HepG2 (cell line): ENCODE measurements at regions of chr11 and their contacts with region 1.

Region 1: GRCh38 chr11:1988667-1989317 is 8.8 kb downstream of the H19 start:
- DNase-seq: peak; percentile 78
- ATAC-seq: peak; percentile 71
- H3K4me3 ChIP-seq: peak overlapping the region in 2 of 3 experiments; percentile 49 to 50; a peak in 3 of 6 replicates
- H3K27ac ChIP-seq: peak overlapping the region; percentile 90
- H3K4me1 ChIP-seq: no peaks in the 10 kb centered on the region
- H3K27me3 ChIP-seq: no peaks in the 10 kb centered on the region
- CTCF ChIP-seq: no peak
- EP300 ChIP-seq: no peak
- POLR2A ChIP-seq: peak; percentile 54 to 60; a peak in 3 of 4 replicates
- RAD21 ChIP-seq: no peak

Region 2: GRCh38 chr11:1694064-1694845 is 294.5 kb before region 1 on chr11:
- CTCF ChIA-PET with region 1: no interaction called
- POLR2A ChIA-PET with region 1: interaction called, 54 read pairs
- in situ Hi-C with region 1: no loop called
- intact Hi-C with region 1: no loop called
- DNase-seq: peak; percentile 53
- ATAC-seq: peak; percentile 38
- H3K4me3 ChIP-seq: peak overlapping the region in 2 of 3 experiments; percentile 14 to 58; a peak in 3 of 6 replicates
- H3K27ac ChIP-seq: peak overlapping the region; percentile 100
- H3K4me1 ChIP-seq: peaks cover 69% of the 10 kb centered on the region
- H3K27me3 ChIP-seq: peaks cover 0 to 3% of the 10 kb centered on the region in 2 experiments; a peak in 3 of 5 replicates
- CTCF ChIP-seq: peak; percentile 99
- EP300 ChIP-seq: peak in 1 of 2 experiments; percentile 38; a peak in 1 of 4 replicates
- POLR2A ChIP-seq: no peak
- RAD21 ChIP-seq: peak; percentile 97

Region 3: GRCh38 chr11:1782831-1783724 is 205.7 kb before region 1 on chr11:
- CTCF ChIA-PET with region 1: no interaction called
- POLR2A ChIA-PET with region 1: no interaction called
- in situ Hi-C with region 1: no loop called
- intact Hi-C with region 1: no loop called
- DNase-seq: no peak
- ATAC-seq: no peak
- H3K4me3 ChIP-seq: peak overlapping the region in 1 of 3 experiments; percentile 32; a peak in 1 of 6 replicates
- H3K27ac ChIP-seq: no peak overlapping the region
- H3K4me1 ChIP-seq: peaks cover 27% of the 10 kb centered on the region
- H3K27me3 ChIP-seq: peaks cover 15 to 69% of the 10 kb centered on the region in 2 experiments
- CTCF ChIP-seq: no peak
- EP300 ChIP-seq: no peak
- POLR2A ChIP-seq: no peak
- RAD21 ChIP-seq: no peak

Region 4: GRCh38 chr11:1953489-1954266 is 35.1 kb before region 1 on chr11:
- CTCF ChIA-PET with region 1: no interaction called
- POLR2A ChIA-PET with region 1: interaction called, 720 read pairs
- in situ Hi-C with region 1: no loop called
- intact Hi-C with region 1: no loop called
- DNase-seq: no peak
- ATAC-seq: peak; percentile 30; the same call in 2 of the 3 replicates
- H3K4me3 ChIP-seq: no peak overlapping the region
- H3K27ac ChIP-seq: no peak overlapping the region
- H3K4me1 ChIP-seq: no peaks in the 10 kb centered on the region
- H3K27me3 ChIP-seq: no peaks in the 10 kb centered on the region
- CTCF ChIP-seq: no peak
- EP300 ChIP-seq: no peak
- POLR2A ChIP-seq: no peak
- RAD21 ChIP-seq: no peak

Region 5: GRCh38 chr11:2012440-2012839 is 23.6 kb after region 1 on chr11:
- CTCF ChIA-PET with region 1: no interaction called
- POLR2A ChIA-PET with region 1: interaction called, 48 read pairs
- in situ Hi-C with region 1: no loop called
- intact Hi-C with region 1: no loop called
- DNase-seq: no peak
- ATAC-seq: no peak
- H3K4me3 ChIP-seq: no peak overlapping the region
- H3K27ac ChIP-seq: no peak overlapping the region
- H3K4me1 ChIP-seq: no peaks in the 10 kb centered on the region
- H3K27me3 ChIP-seq: no peaks in the 10 kb centered on the region
- CTCF ChIP-seq: no peak
- EP300 ChIP-seq: no peak
- POLR2A ChIP-seq: no peak
- RAD21 ChIP-seq: no peak

Region 6: GRCh38 chr11:2036863-2037486 is 48.2 kb after region 1 on chr11:
- CTCF ChIA-PET with region 1: no interaction called
- POLR2A ChIA-PET with region 1: interaction called, 98 read pairs
- in situ Hi-C with region 1: no loop called
- intact Hi-C with region 1: no loop called
- DNase-seq: no peak
- ATAC-seq: peak; percentile 70
- H3K4me3 ChIP-seq: no peak overlapping the region
- H3K27ac ChIP-seq: no peak overlapping the region
- H3K4me1 ChIP-seq: no peaks in the 10 kb centered on the region
- H3K27me3 ChIP-seq: no peaks in the 10 kb centered on the region
- CTCF ChIP-seq: no peak
- EP300 ChIP-seq: no peak
- POLR2A ChIP-seq: no peak
- RAD21 ChIP-seq: no peak

Region 7: GRCh38 chr11:2137202-2138071 is 148.6 kb after region 1 on chr11:
- CTCF ChIA-PET with region 1: no interaction called
- POLR2A ChIA-PET with region 1: interaction called, 108 read pairs
- in situ Hi-C with region 1: no loop called
- intact Hi-C with region 1: no loop called
- DNase-seq: peak; percentile 80
- ATAC-seq: peak; percentile 54
- H3K4me3 ChIP-seq: peak overlapping the region; percentile 72 to 84 (median 80)
- H3K27ac ChIP-seq: peak overlapping the region; percentile 80
- H3K4me1 ChIP-seq: peaks cover 46% of the 10 kb centered on the region
- H3K27me3 ChIP-seq: peaks cover 0 to 26% of the 10 kb centered on the region in 2 experiments; a peak in 3 of 5 replicates
- CTCF ChIP-seq: no peak
- EP300 ChIP-seq: no peak
- POLR2A ChIP-seq: peak in 1 of 2 experiments; percentile 95; a peak in 2 of 4 replicates
- RAD21 ChIP-seq: no peak

Region 8: DNA sequence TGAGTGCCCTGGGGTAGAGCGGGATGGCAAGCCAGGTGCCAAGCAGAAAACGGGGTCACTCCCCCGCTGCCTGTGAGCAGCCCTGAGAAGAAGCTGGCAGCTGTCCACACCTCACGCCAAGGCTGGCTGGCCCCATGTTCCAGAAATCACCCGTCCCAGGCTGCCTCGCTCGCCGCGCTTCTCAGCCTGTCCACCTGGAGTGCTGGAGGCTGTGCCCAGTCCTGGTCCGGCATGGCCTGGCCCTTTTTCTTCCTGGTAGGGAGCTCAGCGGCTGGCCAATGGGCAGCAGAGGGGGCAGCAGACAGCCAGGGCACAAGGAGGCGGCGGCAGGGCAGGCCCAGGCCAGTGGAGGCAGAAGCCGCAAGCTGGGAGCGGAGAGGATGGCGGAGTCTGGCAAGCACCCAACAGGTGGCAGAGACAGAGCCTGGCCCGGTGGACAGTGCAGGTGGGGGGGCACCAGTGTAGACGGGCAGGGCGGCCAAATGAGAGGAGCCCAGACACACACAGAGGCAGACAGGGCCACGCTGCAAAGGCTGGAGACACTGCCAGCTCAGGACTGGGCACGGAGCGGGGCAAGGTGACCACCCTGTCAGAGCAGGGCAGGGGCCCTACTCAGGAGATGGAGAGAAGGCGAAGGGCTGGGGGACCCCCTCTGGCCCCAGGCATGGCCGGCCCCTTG is 220.0 kb after region 1 on chr11:
- CTCF ChIA-PET with region 1: no interaction called
- POLR2A ChIA-PET with region 1: interaction called, 22 read pairs
- in situ Hi-C with region 1: no loop called
- intact Hi-C with region 1: no loop called
- DNase-seq: peak; percentile 12
- ATAC-seq: no peak
- H3K4me3 ChIP-seq: no peak overlapping the region
- H3K27ac ChIP-seq: peak overlapping the region; percentile 99
- H3K4me1 ChIP-seq: peaks cover 91% of the 10 kb centered on the region
- H3K27me3 ChIP-seq: no peaks in the 10 kb centered on the region; a peak in 1 of 5 replicates
- CTCF ChIP-seq: peak; percentile 22; the same call in 1 of the 2 replicates
- EP300 ChIP-seq: no peak
- POLR2A ChIP-seq: no peak
- RAD21 ChIP-seq: peak; percentile 72